ENCODE measurements at regions of chr16 and their contacts with region 1.

Region 1: GRCh38 chr16:86519649-86520316 is 9.5 kb downstream of the FOXF1 start:
- DNase-seq: peak; percentile 62 to 85 (median 82)
- ATAC-seq: peak in 1 of 2 donors; percentile 53
- H3K4me3 ChIP-seq: no peak overlapping the region
- H3K27ac ChIP-seq: no peak overlapping the region
- H3K4me1 ChIP-seq: no peaks in the 10 kb centered on the region
- H3K27me3 ChIP-seq: no peaks in the 10 kb centered on the region

Region 2: DNA sequence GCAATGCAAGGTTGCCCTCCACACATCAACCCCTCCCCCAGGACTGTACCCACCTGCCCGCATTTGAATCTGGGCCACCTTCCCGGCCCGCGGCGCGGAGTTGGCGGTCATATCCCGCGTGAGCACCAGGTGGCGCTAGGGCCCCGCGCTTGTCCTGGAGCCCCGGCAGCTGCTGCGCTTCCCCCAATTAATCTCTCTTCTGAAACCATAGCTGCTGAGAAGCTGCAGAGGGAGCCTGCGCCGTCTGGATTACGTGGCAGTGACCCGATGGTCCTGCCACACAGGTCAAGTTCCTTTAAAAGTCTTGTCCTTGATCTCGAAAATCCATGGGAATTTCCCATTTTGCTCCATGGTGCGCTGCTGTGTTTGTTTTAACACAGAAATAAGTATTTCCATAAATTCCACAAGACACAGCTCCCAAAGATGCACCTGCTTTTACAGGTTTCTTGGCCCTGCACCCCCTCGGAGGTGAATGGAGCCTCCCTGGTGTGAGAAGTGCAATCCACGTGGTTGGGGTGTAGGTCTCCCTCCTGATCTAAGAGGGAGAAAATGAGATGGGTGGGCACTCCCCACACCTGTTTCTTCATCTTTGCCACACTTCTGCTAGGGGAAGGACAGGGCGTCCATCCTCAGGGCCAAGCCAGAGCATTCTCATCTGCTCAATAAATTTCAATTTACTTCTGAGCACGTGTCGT is 698.2 kb before region 1 on chr16:
- intact Hi-C with region 1: loop called in 2 of 4 experiments (anchors 10 kb)
- DNase-seq: peak; percentile 75 to 91 (median 90)
- ATAC-seq: peak; percentile 85 to 87
- H3K4me3 ChIP-seq: no peak overlapping the region
- H3K27ac ChIP-seq: no peak overlapping the region
- H3K4me1 ChIP-seq: no peaks in the 10 kb centered on the region
- H3K27me3 ChIP-seq: no peaks in the 10 kb centered on the region

Region 3: GRCh38 chr16:86072328-86073102 is 447.3 kb before region 1 on chr16:
- intact Hi-C with region 1: loop called (anchors 1 to 5 kb)
- DNase-seq: peak; percentile 64 to 85 (median 81)
- ATAC-seq: peak in 1 of 2 donors; percentile 52
- H3K4me3 ChIP-seq: no peak overlapping the region
- H3K27ac ChIP-seq: no peak overlapping the region
- H3K4me1 ChIP-seq: no peaks in the 10 kb centered on the region
- H3K27me3 ChIP-seq: no peaks in the 10 kb centered on the region

Region 4: DNA sequence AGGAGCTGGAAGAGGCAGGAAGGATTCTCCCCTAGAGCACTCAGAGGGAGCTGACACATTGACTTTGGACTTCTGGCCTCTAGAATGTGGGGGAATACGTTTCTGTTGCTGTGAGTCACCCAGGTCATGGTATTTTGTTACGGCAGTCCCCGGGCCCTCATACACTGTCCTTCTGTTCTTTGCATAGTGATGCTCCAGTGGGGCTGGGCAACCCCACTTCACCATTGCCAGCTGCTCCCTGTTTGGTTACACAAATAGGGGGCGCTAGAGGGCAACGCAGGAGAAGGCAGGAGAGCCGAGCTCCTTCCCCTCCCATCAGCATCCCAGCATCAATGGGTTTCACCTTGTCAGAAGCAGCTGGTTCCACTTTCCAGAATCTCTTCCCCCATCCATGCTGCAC is 267.2 kb before region 1 on chr16:
- intact Hi-C with region 1: loop called in 1 of 4 experiments (anchors 10 kb)
- DNase-seq: no peak
- ATAC-seq: no peak
- H3K4me3 ChIP-seq: no peak overlapping the region
- H3K27ac ChIP-seq: no peak overlapping the region
- H3K4me1 ChIP-seq: no peaks in the 10 kb centered on the region
- H3K27me3 ChIP-seq: no peaks in the 10 kb centered on the region

Region 5: DNA sequence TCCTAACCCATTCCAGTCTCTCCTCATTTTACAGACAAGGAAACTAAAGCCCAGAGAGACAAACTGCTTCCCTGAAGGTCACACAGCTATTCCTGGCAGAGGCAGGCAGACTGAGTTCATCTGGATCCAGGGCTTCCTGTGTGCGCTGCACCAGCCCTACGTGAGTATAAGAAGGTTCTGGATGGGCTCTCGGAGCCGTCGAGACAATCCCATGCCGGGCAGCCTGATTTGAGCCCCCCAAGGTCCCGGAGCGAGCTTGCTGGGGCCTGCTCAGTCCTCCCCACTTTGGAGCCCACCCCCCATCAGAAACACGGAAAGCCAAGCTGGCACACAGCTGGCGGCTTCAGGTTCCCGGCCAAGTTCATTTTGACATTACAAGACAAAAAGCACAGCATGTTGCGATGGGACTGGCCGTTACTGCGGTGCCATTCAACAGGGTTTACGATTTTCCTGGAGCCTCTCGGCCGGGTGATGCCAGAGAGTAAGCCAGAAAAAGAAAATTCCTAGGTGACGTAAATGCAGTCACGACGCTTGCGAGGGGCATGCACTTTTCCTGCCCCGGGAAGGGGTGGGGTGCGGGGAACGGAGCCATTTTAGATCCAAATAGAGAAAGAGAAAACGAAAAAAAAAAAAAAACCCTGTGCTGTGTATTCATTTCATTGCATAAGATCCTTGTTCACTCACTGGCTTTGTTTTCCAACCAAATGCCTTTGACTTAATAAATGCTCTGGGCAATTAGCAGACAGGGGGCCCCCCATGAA is 176.6 kb before region 1 on chr16:
- intact Hi-C with region 1: loop called in 3 of 4 experiments (anchors 5 kb)
- DNase-seq: peak; percentile 74 to 87 (median 76)
- ATAC-seq: peak; percentile 83 to 84
- H3K4me3 ChIP-seq: no peak overlapping the region
- H3K27ac ChIP-seq: peak overlapping the region; percentile 56
- H3K4me1 ChIP-seq: peaks cover 5% of the 10 kb centered on the region
- H3K27me3 ChIP-seq: no peaks in the 10 kb centered on the region

Region 6: DNA sequence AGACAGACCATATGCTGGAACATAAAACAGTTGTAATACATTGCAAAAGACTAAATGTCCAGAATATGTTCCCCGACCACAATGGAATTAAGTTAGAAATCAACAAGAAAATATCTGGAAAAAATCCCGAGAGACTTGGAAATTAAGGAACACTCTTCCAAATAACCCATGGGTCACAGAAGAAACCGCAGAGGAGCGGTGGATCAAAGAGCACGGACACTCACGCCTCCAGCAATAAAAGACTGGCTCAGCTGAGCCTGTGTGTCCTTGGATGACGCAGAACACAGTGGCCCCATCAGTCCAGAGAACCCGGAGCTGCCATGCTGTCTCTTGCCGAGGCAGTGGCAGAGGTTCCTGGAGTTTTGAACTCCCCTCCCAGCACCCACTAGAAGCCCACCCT is 40.4 kb before region 1 on chr16:
- intact Hi-C with region 1: no loop called
- DNase-seq: no peak
- ATAC-seq: no peak
- H3K4me3 ChIP-seq: no peak overlapping the region
- H3K27ac ChIP-seq: no peak overlapping the region
- H3K4me1 ChIP-seq: no peaks in the 10 kb centered on the region
- H3K27me3 ChIP-seq: no peaks in the 10 kb centered on the region

Measured in right cardiac atrium (tissue), 5 donors.